ENCODE measurements at regions of chr6 and their contacts with region 1.

Region 1: DNA sequence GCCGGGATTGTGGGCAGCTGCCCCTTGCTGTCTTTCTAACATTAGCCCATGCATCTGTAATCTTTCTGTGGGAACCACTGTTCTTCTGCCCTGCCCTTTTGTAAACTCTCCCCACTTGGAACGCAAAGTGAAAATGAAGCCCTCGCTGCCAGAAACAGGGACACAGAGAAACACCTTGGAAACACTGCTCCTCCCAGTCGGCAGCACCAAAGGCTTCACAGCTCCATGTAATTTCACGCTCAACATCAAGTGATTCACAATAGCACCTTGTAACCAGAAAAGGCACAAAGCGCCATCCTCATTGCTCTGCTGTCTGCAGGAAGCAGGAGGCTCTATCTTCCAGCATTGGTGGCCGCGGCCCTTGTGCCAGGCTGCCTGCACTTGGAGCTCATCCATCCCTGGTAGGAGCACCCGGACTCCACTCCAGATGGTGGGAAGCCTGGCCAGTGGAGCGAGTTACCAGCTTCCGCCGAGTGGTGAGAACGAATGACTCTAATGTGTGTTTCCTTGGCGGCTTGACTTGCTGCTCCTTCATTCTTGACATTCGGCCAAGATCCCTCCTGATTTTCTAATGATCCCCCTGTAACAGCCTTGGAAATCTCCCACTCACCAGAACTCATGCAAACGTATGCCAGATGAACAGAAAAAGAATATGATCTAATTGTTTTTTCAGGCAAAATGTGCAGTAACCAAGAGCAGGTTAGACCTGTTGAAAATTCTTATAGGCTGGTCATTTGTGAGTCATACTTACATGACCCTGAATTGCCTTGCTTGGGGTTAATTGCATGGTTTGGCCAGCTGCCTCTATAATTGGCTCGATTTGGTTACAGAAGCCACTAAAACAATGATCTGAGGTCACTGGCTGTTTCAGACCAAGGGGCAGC is 169.1 kb upstream of the CDYL start:
- DNase-seq: peak; percentile 91
- H3K4me3 ChIP-seq: no peak overlapping the region
- H3K27ac ChIP-seq: peak overlapping the region; percentile 83
- H3K4me1 ChIP-seq: peaks cover 30% of the 10 kb centered on the region
- H3K27me3 ChIP-seq: no peaks in the 10 kb centered on the region
- CTCF ChIP-seq: no peak
- POLR2A ChIP-seq: no peak

Region 2: GRCh38 chr6:4253604-4254231 is 353.3 kb before region 1 on chr6:
- CTCF ChIA-PET with region 1: no interaction called
- POLR2A ChIA-PET with region 1: no interaction called
- dilution Hi-C with region 1: no loop called
- intact Hi-C with region 1: loop called (anchors 1 kb)
- DNase-seq: peak; percentile 96
- H3K4me3 ChIP-seq: no peak overlapping the region
- H3K27ac ChIP-seq: peak overlapping the region; percentile 60
- H3K4me1 ChIP-seq: peaks cover 50% of the 10 kb centered on the region
- H3K27me3 ChIP-seq: no peaks in the 10 kb centered on the region
- CTCF ChIP-seq: peak; percentile 72 to 75
- POLR2A ChIP-seq: peak; percentile 25

Region 3: DNA sequence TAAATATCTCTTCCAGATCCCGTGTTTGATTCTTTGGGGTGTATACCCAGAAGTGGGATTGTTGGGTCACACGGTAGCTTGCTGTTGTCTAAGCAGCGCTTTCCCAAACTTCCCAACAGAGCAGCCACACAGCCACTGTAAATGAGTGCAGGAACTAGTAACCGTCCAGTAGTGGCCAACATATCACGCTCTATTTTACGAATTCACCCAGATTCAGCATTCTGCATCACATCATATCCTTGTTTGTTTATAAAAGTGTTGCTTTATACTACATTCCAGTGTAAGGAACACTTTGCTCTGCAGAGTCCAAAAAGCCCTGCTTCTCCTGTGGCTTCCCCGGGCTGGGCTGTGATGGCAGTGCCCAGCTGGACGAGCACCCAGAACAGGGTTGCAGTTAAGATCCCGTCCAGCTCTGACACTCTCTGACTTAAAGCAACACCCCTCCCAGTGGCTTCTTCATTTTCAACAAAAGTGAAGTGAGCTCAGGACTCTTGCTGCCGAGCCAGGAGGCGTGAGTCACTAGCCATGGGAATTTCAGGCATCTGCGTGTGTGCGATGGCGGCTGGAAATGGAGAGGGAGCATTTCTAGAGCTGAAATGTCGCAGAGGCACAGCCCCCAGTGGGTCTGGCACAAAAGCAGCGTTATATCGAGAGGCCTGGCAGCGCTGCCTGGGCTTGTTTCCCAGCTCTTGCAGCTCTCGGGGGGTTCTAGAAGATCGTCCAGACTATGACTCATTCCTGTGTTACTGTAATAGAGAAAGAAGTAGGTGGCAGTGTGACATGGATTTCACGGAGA is 255.3 kb before region 1 on chr6:
- CTCF ChIA-PET with region 1: no interaction called
- POLR2A ChIA-PET with region 1: no interaction called
- dilution Hi-C with region 1: no loop called
- intact Hi-C with region 1: loop called (anchors 2 kb)
- DNase-seq: peak; percentile 69
- H3K4me3 ChIP-seq: no peak overlapping the region
- H3K27ac ChIP-seq: peak overlapping the region; percentile 35
- H3K4me1 ChIP-seq: peaks cover 24% of the 10 kb centered on the region
- H3K27me3 ChIP-seq: no peaks in the 10 kb centered on the region
- CTCF ChIP-seq: no peak
- POLR2A ChIP-seq: no peak

Region 4: DNA sequence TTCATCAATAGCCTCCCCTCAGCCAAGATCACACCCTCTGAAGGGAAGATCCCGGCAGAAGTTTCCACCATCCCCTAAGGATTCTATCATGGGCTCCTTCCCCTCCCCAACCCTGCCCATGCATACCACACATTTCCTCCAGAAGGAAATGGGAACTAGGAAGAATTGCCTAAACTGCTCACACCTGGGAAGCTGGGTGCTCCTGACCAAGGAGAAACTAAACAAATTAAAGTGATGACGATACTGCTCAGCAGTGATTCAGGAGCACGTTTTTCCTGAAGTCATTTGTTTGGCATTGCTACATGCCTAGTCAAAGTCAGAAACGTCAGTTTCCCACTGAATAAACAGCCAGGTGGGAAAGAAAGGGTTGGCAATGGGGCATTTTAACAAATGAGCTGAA is 33.1 kb after region 1 on chr6:
- CTCF ChIA-PET with region 1: interaction called, 6 read pairs
- POLR2A ChIA-PET with region 1: no interaction called
- dilution Hi-C with region 1: no loop called
- intact Hi-C with region 1: loop called (anchors 2 kb)
- DNase-seq: peak; percentile 70
- H3K4me3 ChIP-seq: no peak overlapping the region
- H3K27ac ChIP-seq: no peak overlapping the region
- H3K4me1 ChIP-seq: peaks cover 11% of the 10 kb centered on the region
- H3K27me3 ChIP-seq: no peaks in the 10 kb centered on the region
- CTCF ChIP-seq: no peak
- POLR2A ChIP-seq: no peak

Region 5: GRCh38 chr6:4805553-4806336 is 198.7 kb after region 1 on chr6:
- CTCF ChIA-PET with region 1: no interaction called
- POLR2A ChIA-PET with region 1: no interaction called
- dilution Hi-C with region 1: no loop called
- intact Hi-C with region 1: loop called (anchors 5 kb)
- DNase-seq: peak; percentile 41
- H3K4me3 ChIP-seq: no peak overlapping the region
- H3K27ac ChIP-seq: no peak overlapping the region
- H3K4me1 ChIP-seq: peaks cover 9% of the 10 kb centered on the region
- H3K27me3 ChIP-seq: no peaks in the 10 kb centered on the region
- CTCF ChIP-seq: peak; percentile 49 to 57
- POLR2A ChIP-seq: no peak

Measured in endothelial cell of umbilical vein (primary cell).